Activated T-helper 2 cell treated with anti-CD3 and anti-CD28 coated beads, Interferon-gamma antibody, Interleukin-2, Interleukin-4, amounts not matched to agents 10 μg/mL and 5 μg/mL and 100 μg/mL, durations not matched to agents 14 hours and 24 hours and 36 hours (primary cell): ENCODE measurements at regions of chrX and their contacts with region 1.

Region 1: GRCh38 chrX:15158736-15159406 is 111.0 kb downstream of the ASB9 start:
- DNase-seq: peak; percentile 8
- H3K4me3 Mint-ChIP-seq: peak overlapping the region; percentile 78
- H3K27ac Mint-ChIP-seq: peak overlapping the region; percentile 86
- H3K4me1 Mint-ChIP-seq: peaks cover 23% of the 10 kb centered on the region
- H3K27me3 Mint-ChIP-seq: peaks cover 4% of the 10 kb centered on the region

Region 2: DNA sequence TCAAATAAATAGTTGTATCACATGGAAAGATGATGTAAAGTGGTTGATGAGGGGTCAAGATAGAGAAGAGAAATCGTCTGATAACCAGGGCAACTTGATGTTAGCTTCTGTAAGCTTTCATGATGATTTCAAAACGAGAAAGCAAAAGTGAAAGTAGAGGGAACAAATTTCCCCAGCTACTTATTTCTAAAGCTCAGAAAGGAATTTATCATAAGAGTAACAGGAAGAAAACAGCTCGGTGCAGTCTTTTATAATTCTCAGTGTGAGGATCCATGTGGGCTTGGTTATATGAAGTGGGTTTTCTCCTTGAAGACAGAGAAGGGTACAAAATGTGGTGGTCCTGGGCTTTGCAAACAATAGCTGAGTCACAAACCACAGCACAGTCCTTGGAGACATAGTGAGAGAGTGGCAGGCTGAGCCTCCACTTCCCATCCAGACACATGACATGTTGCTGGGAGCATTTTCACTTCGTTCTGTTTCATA is 661.6 kb before region 1 on chrX:
- intact Hi-C with region 1: loop called (anchors 1 kb)
- DNase-seq: no peak
- H3K4me3 Mint-ChIP-seq: peak overlapping the region; percentile 57
- H3K27ac Mint-ChIP-seq: peak overlapping the region; percentile 57
- H3K4me1 Mint-ChIP-seq: peaks cover 10% of the 10 kb centered on the region
- H3K27me3 Mint-ChIP-seq: peaks cover 2% of the 10 kb centered on the region

Region 3: DNA sequence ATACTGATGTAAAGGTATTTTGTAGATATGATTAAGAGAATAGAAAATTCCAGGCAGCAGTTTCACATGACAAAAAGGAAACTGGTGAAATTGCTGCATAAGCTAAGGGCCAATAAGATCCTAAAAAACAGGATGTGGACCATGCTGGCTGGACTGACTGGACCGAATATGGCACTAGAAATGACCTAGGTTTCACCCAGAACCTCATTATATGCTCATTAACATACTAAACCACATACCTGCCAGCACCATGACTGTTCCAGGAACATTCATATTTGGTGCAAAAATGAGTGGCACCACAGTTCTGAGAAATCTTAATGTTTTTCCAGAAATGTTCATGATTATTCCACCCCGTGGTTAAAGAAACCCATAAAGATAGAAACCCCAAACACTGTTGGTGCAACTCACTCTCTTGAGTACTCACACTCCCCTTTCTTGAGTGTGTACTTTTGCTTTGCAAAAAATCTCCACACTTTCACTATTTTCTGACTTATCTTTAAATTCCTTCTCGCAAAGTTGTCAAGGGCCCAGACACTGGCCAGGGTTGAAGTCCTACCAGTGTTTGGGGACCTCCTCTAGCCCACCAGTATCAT is 360.0 kb before region 1 on chrX:
- intact Hi-C with region 1: loop called (anchors 5 kb)
- DNase-seq: no peak
- H3K4me3 Mint-ChIP-seq: no peak overlapping the region
- H3K27ac Mint-ChIP-seq: no peak overlapping the region
- H3K4me1 Mint-ChIP-seq: peaks cover 5% of the 10 kb centered on the region
- H3K27me3 Mint-ChIP-seq: no peaks in the 10 kb centered on the region

Region 4: GRCh38 chrX:15033917-15034316 is 125.0 kb before region 1 on chrX:
- intact Hi-C with region 1: loop called (anchors 5 kb)
- DNase-seq: no peak
- H3K4me3 Mint-ChIP-seq: no peak overlapping the region
- H3K27ac Mint-ChIP-seq: no peak overlapping the region
- H3K4me1 Mint-ChIP-seq: peaks cover 11% of the 10 kb centered on the region
- H3K27me3 Mint-ChIP-seq: no peaks in the 10 kb centered on the region